ENCODE measurements at regions of chr3 and their contacts with region 1.

Region 1: DNA sequence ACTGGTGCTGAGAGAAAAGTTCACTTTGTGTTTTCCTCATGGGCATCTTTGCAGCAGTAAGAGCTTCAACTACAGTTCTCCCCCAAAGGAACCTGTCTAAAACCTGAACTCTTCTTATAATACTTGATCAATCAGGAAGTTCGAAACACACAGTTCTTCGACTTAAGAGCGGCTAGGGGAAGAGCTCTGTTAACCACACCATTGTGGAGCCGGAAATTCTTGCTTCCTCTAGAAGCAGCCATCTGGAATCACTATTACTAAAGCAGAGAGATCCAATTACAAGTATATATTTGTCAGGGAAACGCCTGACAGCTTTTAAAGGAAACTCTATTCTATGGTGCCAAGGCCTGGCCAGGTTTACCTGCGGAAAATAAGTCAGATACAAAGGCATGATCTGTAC is 337.3 kb upstream of the CBLB start:
- DNase-seq: peak; percentile 94
- H3K4me3 ChIP-seq: peak overlapping the region; percentile 25
- H3K27ac ChIP-seq: peak overlapping the region; percentile 93
- H3K4me1 ChIP-seq: peaks cover 37% of the 10 kb centered on the region
- H3K27me3 ChIP-seq: no peaks in the 10 kb centered on the region
- CTCF ChIP-seq: no peak

Region 2: GRCh38 chr3:106542101-106542769 is 336.1 kb after region 1 on chr3:
- CTCF ChIA-PET with region 1: no interaction called
- POLR2A ChIA-PET with region 1: no interaction called
- intact Hi-C with region 1: no loop called
- DNase-seq: no peak
- H3K4me3 ChIP-seq: no peak overlapping the region
- H3K27ac ChIP-seq: no peak overlapping the region
- H3K4me1 ChIP-seq: no peaks in the 10 kb centered on the region
- H3K27me3 ChIP-seq: no peaks in the 10 kb centered on the region
- CTCF ChIP-seq: no peak

Region 3: DNA sequence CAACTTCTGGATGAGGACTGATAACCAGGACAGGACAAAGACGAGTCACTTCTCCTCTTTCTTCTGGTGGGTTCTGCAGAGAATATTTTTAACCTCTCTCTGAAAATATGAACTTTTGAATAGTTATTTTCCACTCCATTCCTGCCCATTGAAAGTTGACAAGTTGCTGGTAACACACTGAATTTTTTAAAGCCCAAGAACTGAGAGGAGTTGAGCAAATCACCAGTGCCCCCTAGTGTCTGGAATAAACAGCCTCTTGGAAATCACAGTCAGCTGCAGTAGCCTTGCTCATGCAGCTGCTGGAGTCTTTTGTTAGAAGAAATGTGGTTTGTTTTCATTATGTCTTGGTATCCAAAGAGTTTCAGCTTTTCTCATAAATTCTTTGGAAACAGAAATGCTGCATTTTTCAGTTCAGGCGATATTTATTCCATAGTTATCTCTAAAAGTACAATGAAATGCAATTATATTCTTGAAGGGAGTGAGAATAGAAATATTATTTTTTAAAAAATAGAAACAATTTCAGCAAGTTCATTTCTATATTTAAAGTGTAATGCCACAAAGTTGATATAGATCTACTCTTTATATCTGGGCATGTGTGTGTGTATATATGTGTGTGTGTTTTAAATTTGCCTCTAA is 403.6 kb after region 1 on chr3:
- CTCF ChIA-PET with region 1: no interaction called
- POLR2A ChIA-PET with region 1: no interaction called
- intact Hi-C with region 1: loop called (anchors 10 kb)
- DNase-seq: peak; percentile 94
- H3K4me3 ChIP-seq: no peak overlapping the region
- H3K27ac ChIP-seq: peak overlapping the region; percentile 53
- H3K4me1 ChIP-seq: peaks cover 29% of the 10 kb centered on the region
- H3K27me3 ChIP-seq: no peaks in the 10 kb centered on the region
- CTCF ChIP-seq: peak; percentile 95

Measured in A673 (cell line).